K562 (cell line): ENCODE measurements at regions of chr1 and their contacts with region 1.

Region 1: GRCh38 chr1:23530747-23531561 is at the start of gene E2F2:
- DNase-seq: peak; percentile 97 to 98 (median 97)
- ATAC-seq: peak; percentile 79
- H3K4me3 ChIP-seq: peak within 1 kb of the TSS; percentile 55
- H3K27ac ChIP-seq: peak within 1 kb of the TSS; percentile 88
- H3K4me1 ChIP-seq: peaks cover 49 to 50% of the 10 kb centered on the region in 2 experiments
- H3K27me3 ChIP-seq: no peaks in the 10 kb centered on the region
- CTCF ChIP-seq: peak; percentile 26 to 63 (median 50); a peak in 4 of 6 replicates
- EP300 ChIP-seq: 0 out of 2 replicates have a peak, but pooled peaks have one; percentile 14
- POLR2A ChIP-seq: peak; percentile 77
- RAD21 ChIP-seq: no peak
- polyA plus RNA-seq, gene E2F2: 3.8 to 4.0 TPM

Region 2: DNA sequence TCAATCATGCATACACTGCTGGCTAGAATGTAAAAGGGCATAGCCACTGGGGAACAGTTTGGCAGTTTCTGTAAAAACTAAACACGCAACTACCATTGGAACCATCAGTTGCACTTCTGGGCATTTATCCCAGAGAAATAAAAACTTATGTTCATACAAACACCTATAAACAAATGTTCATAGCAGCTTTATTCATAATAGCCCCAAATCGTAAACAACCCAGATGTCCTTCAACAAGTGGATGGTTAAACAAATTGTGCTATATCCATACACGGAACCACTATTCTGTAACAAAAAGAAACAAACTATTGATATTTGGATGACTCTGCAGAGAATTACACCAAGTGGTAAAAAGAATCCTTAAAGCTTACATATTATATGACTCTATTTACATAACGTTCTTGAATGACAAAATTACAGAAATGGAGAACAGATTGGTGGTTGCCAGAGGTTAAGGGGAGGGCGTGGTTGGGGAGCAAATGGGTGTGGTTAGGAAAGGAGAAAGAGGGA is 581.1 kb before region 1 on chr1:
- CTCF ChIA-PET with region 1: no interaction called
- POLR2A ChIA-PET with region 1: no interaction called
- in situ Hi-C with region 1: no loop called
- intact Hi-C with region 1: no loop called
- DNase-seq: no peak
- ATAC-seq: no peak
- H3K4me3 ChIP-seq: no peak overlapping the region
- H3K27ac ChIP-seq: no peak overlapping the region
- H3K4me1 ChIP-seq: peaks cover 0 to 12% of the 10 kb centered on the region in 2 experiments; a peak in 1 of 5 replicates
- H3K27me3 ChIP-seq: peaks cover 21 to 50% of the 10 kb centered on the region in 2 experiments
- CTCF ChIP-seq: no peak
- EP300 ChIP-seq: no peak
- POLR2A ChIP-seq: no peak
- RAD21 ChIP-seq: no peak

Region 3: DNA sequence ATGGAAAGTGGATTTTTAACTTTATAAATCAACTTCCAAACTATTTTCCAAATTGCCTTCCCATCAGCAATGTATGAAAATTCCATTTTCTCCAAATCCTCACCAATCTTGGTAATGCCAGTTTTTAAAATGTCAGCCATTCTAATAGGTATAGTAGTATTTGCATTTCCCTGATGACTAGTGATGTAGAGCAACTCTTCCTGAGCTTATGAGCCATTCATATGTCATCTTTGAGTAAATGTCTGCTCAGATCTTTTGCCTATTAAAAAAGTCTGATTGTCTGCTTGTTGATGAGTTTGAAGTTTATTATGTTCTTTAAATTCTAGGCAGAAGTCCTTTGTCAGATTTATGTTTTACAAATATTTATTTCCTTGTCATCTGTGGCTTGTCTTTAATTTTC is 456.9 kb before region 1 on chr1:
- CTCF ChIA-PET with region 1: no interaction called
- POLR2A ChIA-PET with region 1: no interaction called
- in situ Hi-C with region 1: no loop called
- intact Hi-C with region 1: no loop called
- DNase-seq: no peak
- ATAC-seq: no peak
- H3K4me3 ChIP-seq: no peak overlapping the region
- H3K27ac ChIP-seq: no peak overlapping the region
- H3K4me1 ChIP-seq: no peaks in the 10 kb centered on the region
- H3K27me3 ChIP-seq: no peaks in the 10 kb centered on the region
- CTCF ChIP-seq: no peak
- EP300 ChIP-seq: no peak
- POLR2A ChIP-seq: no peak
- RAD21 ChIP-seq: no peak

Region 4: GRCh38 chr1:23506386-23507115 is 24.4 kb before region 1 on chr1:
- CTCF ChIA-PET with region 1: no interaction called
- POLR2A ChIA-PET with region 1: interaction called, 11 read pairs
- in situ Hi-C with region 1: no loop called
- intact Hi-C with region 1: no loop called
- DNase-seq: no peak
- ATAC-seq: no peak; the same call in 2 of the 3 replicates
- H3K4me3 ChIP-seq: no peak overlapping the region
- H3K27ac ChIP-seq: no peak overlapping the region
- H3K4me1 ChIP-seq: peaks cover 4 to 7% of the 10 kb centered on the region in 2 experiments; a peak in 4 of 5 replicates
- H3K27me3 ChIP-seq: no peaks in the 10 kb centered on the region
- CTCF ChIP-seq: no peak
- EP300 ChIP-seq: no peak
- POLR2A ChIP-seq: no peak
- RAD21 ChIP-seq: no peak

Region 5: GRCh38 chr1:23514111-23514679 is 16.8 kb before region 1 on chr1:
- CTCF ChIA-PET with region 1: no interaction called
- POLR2A ChIA-PET with region 1: interaction called, 65 read pairs
- in situ Hi-C with region 1: no loop called
- intact Hi-C with region 1: no loop called
- DNase-seq: peak; percentile 48 to 82 (median 64)
- ATAC-seq: no peak; the same call in 2 of the 3 replicates
- H3K4me3 ChIP-seq: no peak overlapping the region
- H3K27ac ChIP-seq: no peak overlapping the region
- H3K4me1 ChIP-seq: no peaks in the 10 kb centered on the region; a peak in 3 of 5 replicates
- H3K27me3 ChIP-seq: no peaks in the 10 kb centered on the region
- CTCF ChIP-seq: no peak
- EP300 ChIP-seq: no peak
- POLR2A ChIP-seq: no peak
- RAD21 ChIP-seq: no peak